Spleen (tissue), 13 donors: ENCODE measurements at regions of chr17 and their contacts with region 1.

Region 1: GRCh38 chr17:4709794-4710692 is at the start of gene ARRB2:
- DNase-seq: peak; percentile 100
- H3K4me3 ChIP-seq: peak within 1 kb of the TSS; percentile 50 to 93 (median 70)
- H3K27ac ChIP-seq: peak within 1 kb of the TSS; percentile 85 to 99 (median 95)
- H3K4me1 ChIP-seq: peaks cover 22 to 59% (median 46%) of the 10 kb centered on the region in 6 donors
- H3K27me3 ChIP-seq: no peaks in the 10 kb centered on the region
- CTCF ChIP-seq: peak; percentile 49 to 91 (median 80)
- POLR2A ChIP-seq: peak in 2 of 3 donors; percentile 42 to 78
- total RNA-seq, gene ARRB2: 117 to 416 (median 226) TPM

Region 2: GRCh38 chr17:4658478-4659305 is 51.4 kb before region 1 on chr17:
- intact Hi-C with region 1: no loop called
- DNase-seq: no peak
- H3K4me3 ChIP-seq: no peak overlapping the region
- H3K27ac ChIP-seq: no peak overlapping the region
- H3K4me1 ChIP-seq: no peaks in the 10 kb centered on the region
- H3K27me3 ChIP-seq: peaks cover 0 to 18% (median 0%) of the 10 kb centered on the region in 7 donors
- CTCF ChIP-seq: no peak
- POLR2A ChIP-seq: no peak

Region 3: GRCh38 chr17:4833941-4834680 is 124.1 kb after region 1 on chr17:
- intact Hi-C with region 1: no loop called
- DNase-seq: no peak
- H3K4me3 ChIP-seq: peak overlapping the region; percentile 59 to 97 (median 94)
- H3K27ac ChIP-seq: peak overlapping the region; percentile 82 to 96 (median 92)
- H3K4me1 ChIP-seq: peaks cover 28 to 58% (median 41%) of the 10 kb centered on the region in 6 donors
- H3K27me3 ChIP-seq: no peaks in the 10 kb centered on the region
- CTCF ChIP-seq: no peak
- POLR2A ChIP-seq: no peak

Region 4: DNA sequence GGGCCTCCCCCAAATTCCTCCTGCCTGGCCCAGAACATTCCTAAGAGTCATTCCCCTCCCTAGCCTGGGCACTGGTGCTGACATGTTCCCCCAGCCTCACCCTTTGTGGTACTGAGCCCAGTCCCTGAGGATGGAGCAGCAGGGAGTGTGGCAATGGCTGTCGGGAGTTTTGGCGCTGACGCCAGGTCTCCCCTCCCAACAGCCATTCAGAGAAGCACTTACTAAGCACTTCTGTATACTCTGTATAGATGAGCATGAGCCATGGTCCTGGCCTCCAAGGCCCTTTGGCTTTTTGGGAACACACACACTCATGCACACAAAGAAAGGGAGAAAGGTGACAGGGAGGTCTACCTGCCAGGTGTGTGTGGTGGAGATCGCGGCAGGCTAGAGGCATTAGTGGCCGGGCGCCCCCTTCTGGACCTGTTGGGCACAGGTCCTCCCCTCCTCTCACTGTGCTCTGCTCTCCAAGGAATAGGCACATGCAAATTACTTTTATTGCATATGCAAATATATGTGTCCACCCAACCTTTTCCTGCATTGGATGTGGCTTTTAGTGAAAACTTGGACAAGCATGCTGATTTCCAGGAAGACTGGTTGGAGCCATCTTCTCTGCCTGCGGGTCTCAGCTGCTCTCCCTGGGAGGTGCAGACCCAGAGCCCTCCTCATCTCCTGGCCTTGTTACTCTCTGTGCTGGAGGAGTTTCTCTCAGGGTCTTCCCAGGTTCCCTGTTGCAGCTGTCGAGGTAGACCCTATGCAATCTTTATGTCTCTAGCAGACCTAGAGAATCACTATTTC is 171.9 kb after region 1 on chr17:
- intact Hi-C with region 1: loop called (anchors 10 kb)
- DNase-seq: peak; percentile 90
- H3K4me3 ChIP-seq: no peak overlapping the region
- H3K27ac ChIP-seq: no peak overlapping the region
- H3K4me1 ChIP-seq: peaks cover 0 to 29% (median 8%) of the 10 kb centered on the region in 6 donors
- H3K27me3 ChIP-seq: no peaks in the 10 kb centered on the region
- CTCF ChIP-seq: peak; percentile 66 to 90 (median 79)
- POLR2A ChIP-seq: no peak